Calu3 (cell line): ENCODE measurements at regions of chr17 and their contacts with region 1.

Region 1: DNA sequence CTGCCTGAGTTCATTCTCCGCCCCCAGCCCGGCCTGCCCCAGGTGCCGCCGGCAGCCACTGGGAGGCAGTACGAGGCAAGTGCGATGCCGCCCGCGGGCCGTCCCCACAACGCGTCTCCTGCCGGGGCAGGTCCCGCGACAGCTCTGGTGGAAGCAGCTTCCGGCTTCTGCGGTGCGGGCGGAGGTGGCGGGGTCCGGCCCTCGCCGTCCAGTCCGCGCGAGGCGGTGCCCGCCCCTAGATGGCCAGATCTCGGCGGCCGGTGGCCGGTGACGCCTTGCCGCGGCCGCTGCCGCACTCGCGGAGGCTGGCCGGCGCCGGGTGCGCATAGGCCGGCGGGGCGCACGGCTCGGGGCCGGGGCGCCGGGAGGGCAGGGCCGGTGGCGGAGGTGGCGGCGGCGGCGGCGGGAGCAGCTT is 1.8 kb downstream of the GJD3 start:
- DNase-seq: peak; percentile 100
- H3K4me3 Mint-ChIP-seq: peak overlapping the region; percentile 81
- H3K27ac Mint-ChIP-seq: no peak overlapping the region
- H3K4me1 Mint-ChIP-seq: peaks cover 39% of the 10 kb centered on the region
- H3K27me3 Mint-ChIP-seq: peaks cover 9% of the 10 kb centered on the region
- CTCF ChIP-seq: no peak

Region 2: DNA sequence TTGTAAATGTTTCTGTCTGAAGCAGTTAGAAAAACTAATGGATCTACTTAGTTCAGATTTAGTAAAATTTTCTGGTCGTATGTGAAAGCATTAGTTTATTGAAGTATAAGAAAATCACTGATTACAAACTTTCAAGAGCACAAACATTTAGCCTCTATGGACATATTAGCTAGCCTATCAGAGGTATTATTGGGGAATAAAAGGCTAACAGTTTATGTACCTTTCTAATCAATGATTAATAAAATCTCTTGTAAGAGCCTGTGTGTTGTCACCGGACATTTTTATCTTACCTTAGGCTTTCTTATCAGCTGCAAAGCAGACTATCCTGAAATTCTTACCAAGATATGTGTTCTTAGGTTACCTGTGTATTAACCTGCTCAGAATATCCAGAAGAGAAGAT is 473.5 kb before region 1 on chr17:
- CTCF ChIA-PET with region 1: interaction called, 12 read pairs
- intact Hi-C with region 1: loop called (anchors 1 kb)
- DNase-seq: peak; percentile 82
- H3K4me3 Mint-ChIP-seq: no peak overlapping the region
- H3K27ac Mint-ChIP-seq: no peak overlapping the region
- H3K4me1 Mint-ChIP-seq: peaks cover 26% of the 10 kb centered on the region
- H3K27me3 Mint-ChIP-seq: peaks cover 22% of the 10 kb centered on the region
- CTCF ChIP-seq: no peak

Region 3: DNA sequence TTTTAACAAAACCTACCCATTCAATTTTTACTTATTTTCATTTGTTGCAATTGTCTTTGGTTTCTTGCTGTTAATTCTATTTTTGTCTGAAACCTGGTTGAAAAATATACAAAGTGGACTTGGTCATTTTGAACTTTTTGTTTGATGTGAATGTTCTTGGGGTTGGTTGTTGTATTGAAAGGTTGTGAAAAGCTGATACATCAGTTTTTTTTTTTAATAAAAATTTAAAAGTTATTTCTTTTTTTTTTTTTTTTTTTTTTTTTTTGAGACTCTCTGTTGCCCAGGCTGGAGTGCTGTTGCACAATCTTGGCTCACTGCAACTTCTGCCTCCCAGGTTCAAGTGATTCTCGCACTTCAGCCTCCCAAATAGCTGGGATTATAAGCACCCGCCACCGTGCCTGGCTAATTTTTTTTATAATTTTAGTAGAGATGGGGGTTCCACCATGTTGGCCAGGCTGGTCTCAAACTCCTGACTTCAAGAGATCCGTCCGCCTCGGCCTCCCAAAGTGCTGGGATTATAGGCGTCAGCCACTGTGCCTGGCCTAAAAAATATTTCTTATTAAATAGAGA is 114.7 kb before region 1 on chr17:
- CTCF ChIA-PET with region 1: no interaction called
- intact Hi-C with region 1: no loop called
- DNase-seq: no peak
- H3K4me3 Mint-ChIP-seq: no peak overlapping the region
- H3K27ac Mint-ChIP-seq: no peak overlapping the region
- H3K4me1 Mint-ChIP-seq: peaks cover 34% of the 10 kb centered on the region
- H3K27me3 Mint-ChIP-seq: no peaks in the 10 kb centered on the region
- CTCF ChIP-seq: no peak

Region 4: DNA sequence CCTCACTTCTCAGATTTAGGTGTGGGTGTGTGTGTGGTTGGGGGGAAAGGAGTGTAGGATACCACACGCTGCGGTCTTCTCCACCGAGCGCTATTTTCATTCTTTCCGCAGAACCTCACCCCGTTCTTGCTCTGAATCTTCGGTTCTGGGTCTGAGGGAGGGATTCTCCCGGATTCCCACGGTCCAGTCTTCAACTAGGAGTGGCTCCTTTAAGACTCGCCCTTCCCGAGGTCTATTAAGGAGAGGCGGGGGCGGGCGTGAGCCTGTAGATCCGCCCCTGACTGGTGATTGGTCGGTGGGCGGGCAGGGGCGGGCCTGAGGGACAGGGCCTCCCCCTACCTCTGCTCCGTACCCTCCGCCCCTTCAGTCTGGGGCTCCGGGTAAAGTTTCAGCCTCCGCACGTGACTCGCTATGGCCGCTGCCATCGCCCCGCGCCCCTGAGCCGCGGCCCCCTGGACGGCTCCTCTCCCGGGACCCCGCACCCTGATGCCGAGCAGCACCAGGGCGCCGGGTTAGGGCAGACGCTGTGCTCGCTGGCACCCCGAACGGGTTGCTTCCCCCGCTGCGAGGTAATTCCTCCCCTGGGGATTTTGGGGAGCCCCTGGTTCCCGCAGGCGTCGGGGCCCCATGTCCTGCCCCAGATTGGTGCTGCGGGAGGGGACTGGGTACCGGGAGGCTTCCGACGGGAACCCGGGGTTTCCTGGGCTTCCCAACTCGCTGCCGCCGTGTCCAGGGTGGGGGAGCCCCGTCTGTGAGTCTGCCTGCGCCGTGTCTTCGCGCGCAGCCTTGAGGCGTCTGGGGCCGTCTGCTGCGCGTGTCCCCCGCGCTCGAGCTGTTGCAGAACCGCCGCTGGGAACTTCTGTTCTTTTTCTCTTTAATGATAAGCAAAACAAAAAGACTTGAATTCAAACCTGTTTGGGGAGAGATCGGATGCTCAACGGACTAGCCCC is 44.5 kb before region 1 on chr17:
- CTCF ChIA-PET with region 1: interaction called, 1,520 read pairs
- intact Hi-C with region 1: no loop called
- DNase-seq: peak; percentile 100
- H3K4me3 Mint-ChIP-seq: peak overlapping the region; percentile 89
- H3K27ac Mint-ChIP-seq: peak overlapping the region; percentile 71
- H3K4me1 Mint-ChIP-seq: peaks cover 45% of the 10 kb centered on the region
- H3K27me3 Mint-ChIP-seq: no peaks in the 10 kb centered on the region
- CTCF ChIP-seq: no peak

Region 5: DNA sequence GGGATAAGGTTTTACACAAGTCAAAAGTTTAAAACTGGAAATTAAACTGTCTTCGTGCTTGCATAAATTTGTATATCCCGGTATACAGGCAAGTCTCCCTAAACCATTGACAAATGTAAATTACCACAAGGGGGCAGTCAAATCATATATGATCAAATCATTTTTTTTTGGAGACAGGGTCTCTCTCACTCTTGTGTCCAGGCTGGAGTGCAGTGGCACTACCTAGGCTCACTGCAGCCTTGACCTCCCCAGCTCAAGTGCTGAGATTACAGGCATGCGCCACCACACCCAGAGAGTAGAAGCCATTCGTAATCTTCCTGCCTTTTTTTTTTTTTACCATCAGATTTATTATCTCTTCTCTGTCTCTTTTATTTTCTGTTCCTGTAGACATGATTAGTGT is 36.5 kb after region 1 on chr17:
- CTCF ChIA-PET with region 1: no interaction called
- intact Hi-C with region 1: no loop called
- DNase-seq: no peak
- H3K4me3 Mint-ChIP-seq: no peak overlapping the region
- H3K27ac Mint-ChIP-seq: no peak overlapping the region
- H3K4me1 Mint-ChIP-seq: no peaks in the 10 kb centered on the region
- H3K27me3 Mint-ChIP-seq: no peaks in the 10 kb centered on the region
- CTCF ChIP-seq: no peak

Region 6: DNA sequence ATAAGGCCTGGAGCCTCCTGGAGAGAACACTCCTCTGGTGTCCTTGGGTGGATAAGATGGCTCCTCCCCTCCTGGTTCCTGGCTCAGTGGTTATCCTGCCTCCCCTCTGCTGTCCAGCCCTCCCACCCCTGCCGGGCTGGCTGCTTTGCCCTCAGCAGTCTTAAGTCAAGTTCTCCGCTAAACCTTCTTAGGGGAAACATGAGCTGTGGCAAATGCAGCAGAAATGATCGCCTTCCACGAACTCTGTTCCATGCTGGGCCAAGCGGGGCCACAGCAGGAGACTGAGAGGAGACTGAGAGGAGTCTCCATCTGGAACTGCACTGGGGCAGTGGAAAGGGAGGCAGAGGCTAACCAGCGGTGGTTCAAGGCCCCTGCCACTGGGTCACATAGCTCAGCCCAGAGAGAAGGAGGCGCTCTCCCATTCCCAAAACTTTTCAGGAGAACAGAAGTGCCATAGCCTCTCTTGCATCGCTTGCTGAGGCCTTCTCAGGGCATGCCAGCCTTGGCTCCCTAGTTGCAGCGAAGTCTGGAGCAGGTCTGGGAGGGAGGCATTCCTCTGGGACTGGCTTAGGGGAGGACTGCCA is 111.8 kb after region 1 on chr17:
- CTCF ChIA-PET with region 1: interaction called, 22 read pairs
- intact Hi-C with region 1: loop called (anchors 5 kb)
- DNase-seq: no peak
- H3K4me3 Mint-ChIP-seq: no peak overlapping the region
- H3K27ac Mint-ChIP-seq: no peak overlapping the region
- H3K4me1 Mint-ChIP-seq: no peaks in the 10 kb centered on the region
- H3K27me3 Mint-ChIP-seq: peaks cover 65% of the 10 kb centered on the region
- CTCF ChIP-seq: no peak

Region 7: DNA sequence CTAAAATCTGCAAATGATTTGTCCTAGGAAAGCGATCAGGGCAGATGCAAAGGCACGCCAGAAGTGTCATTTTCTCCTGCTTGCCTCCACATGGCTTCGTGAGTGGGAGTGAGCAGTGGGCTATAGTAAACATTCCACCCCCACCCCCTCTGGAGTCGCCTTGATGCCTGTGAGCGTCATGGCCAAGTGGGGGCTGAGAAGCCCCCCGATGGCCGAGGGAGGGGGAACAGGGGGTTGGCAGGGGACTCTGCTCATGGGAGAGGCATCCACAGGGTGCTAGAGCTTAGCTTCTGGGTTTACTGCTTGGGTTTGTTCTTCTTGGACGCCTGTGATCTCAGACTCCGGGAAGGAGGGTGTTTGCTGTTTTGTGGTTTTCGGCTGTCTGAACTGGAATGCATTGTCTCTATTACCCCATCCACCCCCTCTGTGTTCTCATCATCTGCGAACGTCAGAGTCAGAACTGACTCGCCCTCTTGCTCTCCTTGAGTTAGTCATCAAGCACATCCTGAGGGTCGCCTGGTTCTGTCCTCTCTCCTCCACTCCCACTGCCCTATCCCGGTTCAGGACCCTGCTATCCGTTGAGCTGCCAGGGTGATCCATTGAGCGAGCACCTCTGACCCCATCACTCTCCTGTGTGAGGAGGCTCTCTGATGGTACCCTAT is 123.3 kb after region 1 on chr17:
- CTCF ChIA-PET with region 1: no interaction called
- intact Hi-C with region 1: no loop called
- DNase-seq: peak; percentile 94
- H3K4me3 Mint-ChIP-seq: peak overlapping the region; percentile 0
- H3K27ac Mint-ChIP-seq: peak overlapping the region; percentile 1
- H3K4me1 Mint-ChIP-seq: peaks cover 42% of the 10 kb centered on the region
- H3K27me3 Mint-ChIP-seq: peaks cover 75% of the 10 kb centered on the region
- CTCF ChIP-seq: no peak

Region 8: DNA sequence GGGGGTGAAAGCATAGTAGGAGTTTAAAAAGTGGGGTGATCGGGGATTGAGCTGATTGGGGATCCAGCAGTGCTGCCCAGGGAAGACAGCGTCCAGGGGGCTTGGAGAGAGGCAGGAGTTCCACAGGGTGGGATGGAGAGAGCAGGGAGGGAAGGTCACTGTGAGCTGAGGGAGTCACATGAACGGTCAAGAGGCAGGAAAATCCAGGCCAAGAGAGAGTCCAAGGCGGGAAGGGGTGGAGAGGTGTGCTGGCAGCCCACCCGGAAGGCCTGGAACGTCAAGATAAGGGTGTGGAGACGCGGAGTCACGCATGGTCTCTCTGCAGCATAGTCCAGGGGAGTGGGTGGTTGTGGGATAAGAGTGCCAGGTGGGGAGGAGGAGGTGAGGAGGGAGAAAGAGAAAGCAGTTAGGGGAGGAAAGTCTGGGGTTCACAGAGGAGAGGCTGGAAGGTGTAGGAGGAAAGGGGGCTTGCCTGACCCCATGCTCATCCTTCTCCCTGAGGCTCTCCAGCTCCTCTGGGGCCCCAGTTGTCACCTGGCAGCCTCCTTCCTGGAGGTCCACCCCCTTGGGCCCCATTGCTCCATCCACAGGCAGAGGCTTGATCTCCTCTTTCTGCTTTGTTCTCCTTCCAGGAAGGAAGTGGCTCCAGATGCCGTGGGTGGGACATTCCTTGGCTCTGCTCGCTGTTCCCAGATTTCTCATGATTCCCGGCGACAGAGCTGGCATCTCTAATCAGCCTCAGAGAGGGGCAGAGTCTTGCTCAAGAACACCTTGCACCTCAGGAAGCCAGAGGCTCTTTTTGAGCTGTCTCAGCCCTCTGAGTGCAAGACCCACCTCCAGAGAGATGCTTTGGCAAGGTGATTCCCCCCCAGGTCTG is 173.8 kb after region 1 on chr17:
- CTCF ChIA-PET with region 1: interaction called, 222 read pairs
- intact Hi-C with region 1: loop called (anchors 1 kb)
- DNase-seq: peak; percentile 68
- H3K4me3 Mint-ChIP-seq: no peak overlapping the region
- H3K27ac Mint-ChIP-seq: no peak overlapping the region
- H3K4me1 Mint-ChIP-seq: peaks cover 24% of the 10 kb centered on the region
- H3K27me3 Mint-ChIP-seq: peaks cover 85% of the 10 kb centered on the region
- CTCF ChIP-seq: no peak

Region 9: GRCh38 chr17:40632216-40632615 is 269.5 kb after region 1 on chr17:
- CTCF ChIA-PET with region 1: interaction called, 10 read pairs
- intact Hi-C with region 1: no loop called
- DNase-seq: peak; percentile 4
- H3K4me3 Mint-ChIP-seq: no peak overlapping the region
- H3K27ac Mint-ChIP-seq: no peak overlapping the region
- H3K4me1 Mint-ChIP-seq: no peaks in the 10 kb centered on the region
- H3K27me3 Mint-ChIP-seq: no peaks in the 10 kb centered on the region
- CTCF ChIP-seq: no peak